ENCODE measurements at regions of chr1 and their contacts with region 1.

Region 1: GRCh38 chr1:25430666-25431505 is at the start of gene MACO1:
- DNase-seq: peak; percentile 92 to 99 (median 96)
- ATAC-seq: peak; percentile 80
- H3K4me3 ChIP-seq: peak within 1 kb of the TSS; percentile 64 to 94
- H3K4me3 Mint-ChIP-seq: peak within 1 kb of the TSS; percentile 94
- H3K27ac ChIP-seq: peak within 1 kb of the TSS; percentile 88 to 99
- H3K27ac Mint-ChIP-seq: peak within 1 kb of the TSS; percentile 99
- H3K4me1 ChIP-seq: peaks cover 44% of the 10 kb centered on the region
- H3K4me1 Mint-ChIP-seq: peaks cover 53% of the 10 kb centered on the region
- H3K27me3 ChIP-seq: no peaks in the 10 kb centered on the region
- H3K27me3 Mint-ChIP-seq: no peaks in the 10 kb centered on the region
- CTCF ChIP-seq: no peak
- total RNA-seq, gene MACO1: 44.7 to 47.0 TPM

Region 2: DNA sequence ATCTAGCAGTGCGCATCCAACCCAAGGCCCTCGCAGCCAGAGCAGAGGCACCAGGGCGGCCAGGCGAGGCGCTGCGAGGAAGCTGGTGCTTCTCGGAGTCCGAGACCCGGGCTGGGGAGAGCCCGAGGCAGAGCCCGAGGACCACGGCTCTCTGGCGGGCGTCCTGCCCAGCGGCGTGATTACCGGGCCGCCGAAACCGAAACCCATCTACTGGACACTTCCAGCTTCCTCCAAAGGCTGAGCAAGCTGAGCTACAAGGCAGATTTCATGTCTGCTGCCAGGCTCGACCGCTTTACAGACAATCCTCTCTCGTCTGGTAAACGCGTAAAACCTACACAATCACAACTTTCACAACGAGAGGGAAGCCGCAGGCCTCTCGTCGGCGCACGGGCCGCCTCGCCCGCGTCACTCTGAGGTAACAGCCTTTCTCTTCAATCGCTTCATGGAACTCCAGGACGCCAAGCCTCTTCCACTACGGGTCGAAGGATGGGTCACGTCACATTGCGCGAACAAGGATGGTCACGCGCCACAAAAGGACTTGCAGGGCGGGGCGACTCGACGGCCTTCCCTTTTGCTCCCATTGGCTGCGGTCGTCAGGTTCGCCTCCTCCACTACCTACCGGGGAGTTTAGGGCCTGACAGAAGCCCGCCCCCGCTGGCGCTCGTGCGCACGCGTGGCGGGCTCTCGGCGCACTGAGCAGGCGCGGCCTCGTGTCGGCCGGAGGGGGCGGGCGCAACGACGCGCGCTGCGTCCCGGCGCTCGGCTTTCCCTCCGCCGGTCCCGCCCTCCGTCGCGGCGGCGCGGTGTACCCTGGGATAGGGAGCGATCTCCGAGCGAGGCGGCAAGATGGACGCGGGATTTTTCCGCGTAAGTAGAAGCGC is 788.2 kb before region 1 on chr1 and contains the start of gene SRRM1:
- CTCF ChIA-PET with region 1: no interaction called
- POLR2A ChIA-PET with region 1: no interaction called
- intact Hi-C with region 1: loop called in 1 of 2 experiments (anchors 10 kb)
- DNase-seq: peak; percentile 96 to 100 (median 98)
- ATAC-seq: peak; percentile 86
- H3K4me3 ChIP-seq: peak within 1 kb of the TSS; percentile 89 to 98
- H3K4me3 Mint-ChIP-seq: peak within 1 kb of the TSS; percentile 88
- H3K27ac ChIP-seq: peak within 1 kb of the TSS; percentile 98 to 100
- H3K27ac Mint-ChIP-seq: peak within 1 kb of the TSS; percentile 99
- H3K4me1 ChIP-seq: peaks cover 32% of the 10 kb centered on the region
- H3K4me1 Mint-ChIP-seq: peaks cover 41% of the 10 kb centered on the region
- H3K27me3 ChIP-seq: no peaks in the 10 kb centered on the region
- H3K27me3 Mint-ChIP-seq: no peaks in the 10 kb centered on the region
- CTCF ChIP-seq: no peak
- total RNA-seq, gene SRRM1: 460 to 474 TPM

Region 3: GRCh38 chr1:25247024-25247828 is 183.7 kb before region 1 on chr1 and contains the start of gene RSRP1:
- CTCF ChIA-PET with region 1: no interaction called
- POLR2A ChIA-PET with region 1: no interaction called
- intact Hi-C with region 1: loop called in 1 of 2 experiments (anchors 1 kb)
- DNase-seq: peak; percentile 99 to 100 (median 100)
- ATAC-seq: peak; percentile 86
- H3K4me3 ChIP-seq: peak within 1 kb of the TSS; percentile 82
- H3K4me3 Mint-ChIP-seq: peak within 1 kb of the TSS; percentile 96
- H3K27ac ChIP-seq: peak within 1 kb of the TSS; percentile 97 to 99
- H3K27ac Mint-ChIP-seq: peak within 1 kb of the TSS; percentile 99
- H3K4me1 ChIP-seq: peaks cover 45% of the 10 kb centered on the region
- H3K4me1 Mint-ChIP-seq: peaks cover 43% of the 10 kb centered on the region
- H3K27me3 ChIP-seq: no peaks in the 10 kb centered on the region
- H3K27me3 Mint-ChIP-seq: no peaks in the 10 kb centered on the region
- CTCF ChIP-seq: no peak
- total RNA-seq, gene RSRP1: 472 to 482 TPM

Region 4: DNA sequence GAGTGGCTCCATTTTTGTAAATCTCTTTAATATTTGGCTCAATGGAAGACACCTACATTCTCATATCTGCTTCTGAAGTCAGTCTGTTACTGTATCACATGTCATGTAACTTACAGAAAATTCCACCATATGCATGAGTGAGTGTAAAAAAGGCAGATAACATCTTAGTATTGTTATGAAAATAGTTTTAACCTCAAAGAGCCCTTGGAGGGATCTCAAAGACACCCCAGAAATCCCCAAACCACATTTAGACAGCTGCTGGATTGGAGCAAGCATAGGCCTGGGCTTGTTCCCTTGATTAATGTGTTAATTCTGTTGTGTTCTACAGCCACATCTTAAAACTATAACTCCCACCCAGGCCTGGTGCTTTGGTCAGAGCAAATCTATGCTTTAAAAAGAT is 16.7 kb after region 1 on chr1:
- CTCF ChIA-PET with region 1: interaction called, 3 read pairs
- POLR2A ChIA-PET with region 1: interaction called, 8 read pairs
- intact Hi-C with region 1: loop called in 1 of 2 experiments (anchors 2 kb)
- DNase-seq: peak in 1 of 9 experiments; percentile 24
- ATAC-seq: no peak
- H3K4me3 ChIP-seq: no peak overlapping the region
- H3K4me3 Mint-ChIP-seq: no peak overlapping the region
- H3K27ac ChIP-seq: no peak overlapping the region
- H3K27ac Mint-ChIP-seq: no peak overlapping the region
- H3K4me1 ChIP-seq: peaks cover 10% of the 10 kb centered on the region
- H3K4me1 Mint-ChIP-seq: peaks cover 29% of the 10 kb centered on the region
- H3K27me3 ChIP-seq: no peaks in the 10 kb centered on the region
- H3K27me3 Mint-ChIP-seq: no peaks in the 10 kb centered on the region
- CTCF ChIP-seq: no peak

Region 5: DNA sequence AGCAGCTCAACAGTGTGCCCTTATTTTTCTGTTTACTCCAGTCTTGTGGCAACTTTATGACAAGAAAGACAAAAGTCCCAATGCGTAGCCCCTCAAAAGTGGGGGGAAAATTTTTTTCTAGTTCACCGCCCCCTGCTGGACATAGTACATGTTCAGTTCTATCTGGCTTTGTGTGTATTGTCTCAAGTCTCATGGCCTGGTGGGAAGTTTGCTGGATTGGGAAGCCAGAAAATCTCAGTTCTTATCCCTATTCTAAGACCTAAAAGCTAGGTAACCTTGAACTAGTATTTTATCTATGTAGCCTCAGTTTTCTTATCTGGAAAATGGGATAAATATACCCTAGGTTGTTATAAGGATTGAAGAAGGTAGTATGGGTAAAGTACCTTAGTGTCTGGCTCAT is 56.7 kb after region 1 on chr1:
- CTCF ChIA-PET with region 1: interaction called, 16 read pairs
- POLR2A ChIA-PET with region 1: interaction called, 5 read pairs
- intact Hi-C with region 1: loop called in 1 of 2 experiments (anchors 2 kb)
- DNase-seq: peak in 7 of 9 experiments; percentile 16 to 61 (median 55)
- ATAC-seq: peak; percentile 54
- H3K4me3 ChIP-seq: no peak overlapping the region
- H3K4me3 Mint-ChIP-seq: no peak overlapping the region
- H3K27ac ChIP-seq: no peak overlapping the region
- H3K27ac Mint-ChIP-seq: no peak overlapping the region
- H3K4me1 ChIP-seq: no peaks in the 10 kb centered on the region
- H3K4me1 Mint-ChIP-seq: peaks cover 12% of the 10 kb centered on the region
- H3K27me3 ChIP-seq: no peaks in the 10 kb centered on the region
- H3K27me3 Mint-ChIP-seq: no peaks in the 10 kb centered on the region
- CTCF ChIP-seq: peak; percentile 74

Region 6: GRCh38 chr1:25774921-25775801 is 344.3 kb after region 1 on chr1:
- CTCF ChIA-PET with region 1: no interaction called
- POLR2A ChIA-PET with region 1: interaction called, 4 read pairs
- intact Hi-C with region 1: loop called in 1 of 2 experiments (anchors 1 kb)
- DNase-seq: peak; percentile 60 to 96 (median 84)
- ATAC-seq: peak; percentile 86
- H3K4me3 ChIP-seq: peak overlapping the region in 1 of 2 experiments; percentile 59
- H3K4me3 Mint-ChIP-seq: peak overlapping the region; percentile 83
- H3K27ac ChIP-seq: peak overlapping the region; percentile 44 to 92
- H3K27ac Mint-ChIP-seq: peak overlapping the region; percentile 99
- H3K4me1 ChIP-seq: peaks cover 63% of the 10 kb centered on the region
- H3K4me1 Mint-ChIP-seq: peaks cover 76% of the 10 kb centered on the region
- H3K27me3 ChIP-seq: no peaks in the 10 kb centered on the region
- H3K27me3 Mint-ChIP-seq: no peaks in the 10 kb centered on the region
- CTCF ChIP-seq: no peak

Region 7: DNA sequence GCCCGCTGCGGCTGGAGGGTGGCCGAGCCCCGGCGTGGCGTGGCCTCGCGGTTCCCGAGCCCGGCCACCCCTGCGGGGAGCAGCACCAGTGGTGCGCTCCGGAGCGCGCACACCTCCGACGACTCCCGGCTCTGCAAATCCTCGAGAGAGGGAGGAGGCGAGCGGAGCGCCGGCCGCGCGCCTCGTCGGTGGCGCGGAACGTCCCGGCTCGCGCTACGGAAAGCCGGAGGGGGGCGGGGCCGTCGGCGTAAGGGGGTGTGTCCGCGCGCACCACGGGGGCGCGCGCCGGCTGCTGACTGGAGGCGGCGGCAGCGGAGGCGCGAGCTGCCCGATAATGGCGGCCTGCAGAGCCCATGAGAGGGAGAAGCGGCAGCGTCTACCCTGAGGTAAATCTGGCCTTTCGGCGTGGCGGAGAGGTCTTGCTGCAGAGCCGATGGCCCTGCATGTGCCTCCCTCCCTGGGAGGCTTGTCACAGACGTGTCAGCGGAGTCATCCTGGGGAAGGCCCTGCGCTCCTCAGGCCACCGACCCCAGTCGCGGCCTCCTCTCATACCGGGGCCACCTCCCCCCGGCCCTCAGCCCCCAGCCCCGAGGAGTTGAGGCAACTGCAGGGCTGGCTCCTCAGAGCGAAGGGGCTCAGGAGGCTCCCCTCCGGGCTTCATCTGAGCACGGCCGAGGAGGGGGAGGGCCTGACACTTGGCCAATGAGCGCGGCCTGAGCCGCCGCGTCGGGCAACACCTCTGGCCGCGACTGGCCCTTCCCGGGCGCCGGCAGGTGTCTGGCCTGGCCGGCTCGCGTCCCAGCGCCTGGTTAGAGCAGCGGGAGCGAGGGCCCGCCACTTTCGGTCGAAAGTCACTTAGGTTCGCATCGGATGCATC is 680.9 kb after region 1 on chr1 and contains the start of gene PDIK1L:
- CTCF ChIA-PET with region 1: no interaction called
- POLR2A ChIA-PET with region 1: no interaction called
- intact Hi-C with region 1: loop called in 1 of 2 experiments (anchors 2 kb)
- DNase-seq: peak; percentile 92 to 98 (median 94)
- ATAC-seq: peak; percentile 87
- H3K4me3 ChIP-seq: peak within 1 kb of the TSS; percentile 98 to 99
- H3K4me3 Mint-ChIP-seq: peak within 1 kb of the TSS; percentile 92
- H3K27ac ChIP-seq: peak within 1 kb of the TSS; percentile 65 to 79
- H3K27ac Mint-ChIP-seq: peak within 1 kb of the TSS; percentile 91
- H3K4me1 ChIP-seq: peaks cover 19% of the 10 kb centered on the region
- H3K4me1 Mint-ChIP-seq: peaks cover 30% of the 10 kb centered on the region
- H3K27me3 ChIP-seq: no peaks in the 10 kb centered on the region
- H3K27me3 Mint-ChIP-seq: no peaks in the 10 kb centered on the region
- CTCF ChIP-seq: no peak
- total RNA-seq, gene PDIK1L: 10.2 to 10.8 TPM